ENCODE measurements at regions of chr6 and their contacts with region 1.

Region 1: GRCh38 chr6:12605888-12606345 is 110.7 kb upstream of the PHACTR1 start:
- DNase-seq: peak; percentile 67
- H3K4me3 ChIP-seq: no peak overlapping the region
- H3K27ac ChIP-seq: peak overlapping the region in 1 of 2 donors; percentile 43
- H3K4me1 ChIP-seq: peaks cover 23% of the 10 kb centered on the region
- H3K27me3 ChIP-seq: no peaks in the 10 kb centered on the region
- CTCF ChIP-seq: peak; percentile 21 to 58 (median 45)
- POLR2A ChIP-seq: no peak

Region 2: GRCh38 chr6:12395898-12396297 is 210.0 kb before region 1 on chr6:
- intact Hi-C with region 1: loop called (anchors 10 kb)
- DNase-seq: no peak
- H3K4me3 ChIP-seq: no peak overlapping the region
- H3K27ac ChIP-seq: no peak overlapping the region
- H3K4me1 ChIP-seq: no peaks in the 10 kb centered on the region
- H3K27me3 ChIP-seq: no peaks in the 10 kb centered on the region
- CTCF ChIP-seq: peak in 1 of 3 experiments; percentile 4
- POLR2A ChIP-seq: no peak

Region 3: DNA sequence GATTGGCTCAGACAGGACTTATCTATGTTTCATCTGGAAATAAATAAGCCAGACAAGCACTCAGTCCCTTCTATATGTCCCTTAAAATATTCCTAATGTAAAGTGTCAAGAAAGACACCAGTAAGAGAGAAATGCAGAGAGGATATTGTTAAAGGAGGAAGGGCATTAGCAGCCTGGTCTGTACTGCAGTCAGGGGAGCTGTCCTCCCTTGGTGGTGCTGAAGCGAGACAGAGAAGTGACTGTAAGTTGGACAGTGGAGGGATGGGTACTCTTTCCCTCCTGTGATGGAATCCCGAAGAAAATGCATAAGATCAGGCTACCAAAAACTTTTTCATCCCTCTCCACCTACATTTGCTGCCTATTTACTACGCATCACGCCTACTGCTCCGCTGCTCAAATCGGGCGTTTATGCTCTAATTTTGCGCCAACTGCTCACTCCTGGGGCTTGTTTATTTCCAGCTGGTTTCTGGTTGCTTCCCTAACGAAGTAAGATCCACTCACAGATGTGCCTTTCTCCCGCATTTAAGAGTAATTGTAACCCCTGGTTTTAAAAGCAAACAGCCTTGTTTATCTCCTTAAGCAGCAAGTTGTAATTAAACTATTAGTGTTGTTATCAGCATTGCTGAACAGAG is 145.9 kb after region 1 on chr6:
- intact Hi-C with region 1: no loop called
- DNase-seq: peak; percentile 88
- H3K4me3 ChIP-seq: no peak overlapping the region
- H3K27ac ChIP-seq: no peak overlapping the region
- H3K4me1 ChIP-seq: no peaks in the 10 kb centered on the region
- H3K27me3 ChIP-seq: no peaks in the 10 kb centered on the region
- CTCF ChIP-seq: no peak
- POLR2A ChIP-seq: no peak

Measured in testis (tissue), 5 donors.